CD14-positive monocyte (primary cell): ENCODE measurements at regions of chr19 and their contacts with region 1.

Region 1: GRCh38 chr19:14031719-14032480 is at the start of gene IL27RA:
- DNase-seq: peak; percentile 48 to 62 (median 59)
- H3K4me3 ChIP-seq: peak within 1 kb of the TSS; percentile 54 to 98 (median 96)
- H3K4me3 Mint-ChIP-seq: peak within 1 kb of the TSS; percentile 91 to 95
- H3K27ac ChIP-seq: peak within 1 kb of the TSS; percentile 90 to 94
- H3K27ac Mint-ChIP-seq: peak within 1 kb of the TSS; percentile 86 to 96 (median 91)
- H3K4me1 ChIP-seq: peaks cover 23 to 25% of the 10 kb centered on the region in 2 donors
- H3K4me1 Mint-ChIP-seq: peaks cover 28% of the 10 kb centered on the region
- H3K27me3 ChIP-seq: no peaks in the 10 kb centered on the region
- H3K27me3 Mint-ChIP-seq: peaks cover 0 to 3% (median 2%) of the 10 kb centered on the region in 3 donors
- CTCF ChIP-seq: peak; percentile 89
- polyA plus RNA-seq, gene IL27RA: 40.4 to 61.5 (median 54.9) TPM

Region 2: GRCh38 chr19:13839130-13839937 is 192.6 kb before region 1 on chr19:
- intact Hi-C with region 1: no loop called
- DNase-seq: peak; percentile 92 to 95 (median 94)
- H3K4me3 ChIP-seq: peak overlapping the region; percentile 69 to 97 (median 90)
- H3K4me3 Mint-ChIP-seq: peak overlapping the region; percentile 91 to 96
- H3K27ac ChIP-seq: peak overlapping the region; percentile 99 to 100
- H3K27ac Mint-ChIP-seq: peak overlapping the region; percentile 98 to 100 (median 99)
- H3K4me1 ChIP-seq: peaks cover 73 to 74% of the 10 kb centered on the region in 2 donors
- H3K4me1 Mint-ChIP-seq: peaks cover 51% of the 10 kb centered on the region
- H3K27me3 ChIP-seq: no peaks in the 10 kb centered on the region
- H3K27me3 Mint-ChIP-seq: peaks cover 0 to 18% (median 6%) of the 10 kb centered on the region in 3 donors
- CTCF ChIP-seq: no peak

Region 3: DNA sequence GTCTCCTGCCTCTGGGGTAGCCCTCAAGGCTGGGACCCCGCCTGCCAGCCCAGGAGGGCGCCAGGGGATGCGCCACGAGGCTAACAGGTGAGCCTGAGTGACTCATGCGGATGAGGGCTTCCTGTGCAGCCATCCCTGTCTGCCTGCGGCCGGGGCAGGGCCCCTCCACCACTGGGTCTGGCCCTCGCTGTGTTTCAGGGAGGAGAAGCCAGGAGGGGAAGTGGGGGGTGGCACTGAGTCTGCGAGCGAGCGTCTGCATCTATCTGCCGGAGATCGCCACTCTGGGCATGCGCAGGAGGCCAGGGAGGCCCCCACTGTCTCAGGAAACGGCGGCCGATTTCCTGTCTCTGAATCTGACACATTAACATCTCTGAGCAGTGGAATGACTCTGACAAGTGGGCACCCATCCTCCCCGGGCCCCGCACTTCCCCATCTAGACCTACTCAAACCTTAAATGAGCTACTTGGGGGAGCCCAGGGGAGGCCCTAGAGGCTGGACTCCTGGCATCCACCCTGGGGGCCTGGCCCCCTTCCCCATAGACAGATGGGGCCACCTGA is 45.5 kb before region 1 on chr19:
- intact Hi-C with region 1: loop called in 1 of 2 experiments (anchors 5 kb)
- DNase-seq: peak; percentile 99
- H3K4me3 ChIP-seq: peak overlapping the region in 2 of 3 experiments; percentile 10 to 59
- H3K4me3 Mint-ChIP-seq: peak overlapping the region; percentile 74 to 85
- H3K27ac ChIP-seq: peak overlapping the region; percentile 94 to 100
- H3K27ac Mint-ChIP-seq: peak overlapping the region; percentile 98 to 99 (median 99)
- H3K4me1 ChIP-seq: peaks cover 47 to 55% of the 10 kb centered on the region in 2 donors
- H3K4me1 Mint-ChIP-seq: peaks cover 61% of the 10 kb centered on the region
- H3K27me3 ChIP-seq: no peaks in the 10 kb centered on the region
- H3K27me3 Mint-ChIP-seq: peaks cover 0 to 7% (median 3%) of the 10 kb centered on the region in 3 donors
- CTCF ChIP-seq: no peak

Region 4: GRCh38 chr19:13995017-13995728 is 36.7 kb before region 1 on chr19:
- intact Hi-C with region 1: loop called in 1 of 2 experiments (anchors 5 kb)
- DNase-seq: no peak
- H3K4me3 ChIP-seq: no peak overlapping the region
- H3K4me3 Mint-ChIP-seq: no peak overlapping the region
- H3K27ac ChIP-seq: no peak overlapping the region
- H3K27ac Mint-ChIP-seq: no peak overlapping the region
- H3K4me1 ChIP-seq: no peaks in the 10 kb centered on the region
- H3K4me1 Mint-ChIP-seq: no peaks in the 10 kb centered on the region
- H3K27me3 ChIP-seq: no peaks in the 10 kb centered on the region
- H3K27me3 Mint-ChIP-seq: no peaks in the 10 kb centered on the region
- CTCF ChIP-seq: no peak

Region 5: GRCh38 chr19:14073261-14073924 is 41.5 kb after region 1 on chr19:
- intact Hi-C with region 1: no loop called
- DNase-seq: peak; percentile 65 to 66 (median 66)
- H3K4me3 ChIP-seq: peak overlapping the region; percentile 50 to 95 (median 67)
- H3K4me3 Mint-ChIP-seq: peak overlapping the region; percentile 97 to 99
- H3K27ac ChIP-seq: peak overlapping the region; percentile 27 to 56
- H3K27ac Mint-ChIP-seq: peak overlapping the region in 4 of 7 donors; percentile 79 to 89 (median 87)
- H3K4me1 ChIP-seq: peaks cover 61 to 67% of the 10 kb centered on the region in 2 donors
- H3K4me1 Mint-ChIP-seq: peaks cover 46% of the 10 kb centered on the region
- H3K27me3 ChIP-seq: peaks cover 0 to 22% of the 10 kb centered on the region in 2 donors
- H3K27me3 Mint-ChIP-seq: peaks cover 18 to 45% (median 34%) of the 10 kb centered on the region in 3 donors
- CTCF ChIP-seq: peak; percentile 58